Activated T-helper 1 cell treated with anti-CD3 and anti-CD28 coated beads, Interleukin-12 subunit alpha, Interleukin-12 subunit beta, Interleukin-2, Interleukin-4 antibody, amounts not matched to agents 30 ng/mL and 10 ng/mL and 1 ng/mL, durations not matched to agents 14 hours and 24 hours and 36 hours (primary cell): ENCODE measurements at regions of chr9 and their contacts with region 1.

Region 1: DNA sequence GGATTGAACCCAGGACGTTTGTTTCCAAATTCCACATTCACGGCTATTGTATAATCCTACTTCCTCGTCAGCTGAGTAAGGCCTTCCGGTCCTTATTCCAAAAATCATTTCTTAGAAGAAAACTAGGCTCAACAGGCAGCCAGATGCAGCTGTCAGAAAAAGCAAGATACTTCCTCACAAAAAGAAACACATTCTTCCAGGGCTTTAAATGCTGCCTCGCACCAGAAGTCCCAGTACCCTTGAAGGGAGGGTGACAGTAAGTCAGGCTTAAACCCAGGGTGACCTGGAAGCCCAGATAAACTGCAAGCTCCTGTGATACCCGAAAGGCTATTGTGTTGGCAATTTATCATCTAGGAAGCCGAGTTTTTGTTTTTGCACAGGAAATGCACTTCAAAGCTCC is 414.0 kb downstream of the NFIB start:
- DNase-seq: no peak
- H3K4me3 Mint-ChIP-seq: no peak overlapping the region
- H3K27ac Mint-ChIP-seq: no peak overlapping the region
- H3K4me1 Mint-ChIP-seq: no peaks in the 10 kb centered on the region
- H3K27me3 Mint-ChIP-seq: no peaks in the 10 kb centered on the region

Region 2: GRCh38 chr9:13705918-13706317 is 194.0 kb before region 1 on chr9:
- intact Hi-C with region 1: no loop called
- DNase-seq: no peak
- H3K4me3 Mint-ChIP-seq: no peak overlapping the region
- H3K27ac Mint-ChIP-seq: no peak overlapping the region
- H3K4me1 Mint-ChIP-seq: no peaks in the 10 kb centered on the region
- H3K27me3 Mint-ChIP-seq: no peaks in the 10 kb centered on the region

Region 3: GRCh38 chr9:13865869-13866268 is 34.1 kb before region 1 on chr9:
- intact Hi-C with region 1: loop called (anchors 5 kb)
- DNase-seq: no peak
- H3K4me3 Mint-ChIP-seq: no peak overlapping the region
- H3K27ac Mint-ChIP-seq: no peak overlapping the region
- H3K4me1 Mint-ChIP-seq: no peaks in the 10 kb centered on the region
- H3K27me3 Mint-ChIP-seq: no peaks in the 10 kb centered on the region